Endothelial cell of umbilical vein (primary cell): ENCODE measurements at regions of chr19 and their contacts with region 1.

Region 1: DNA sequence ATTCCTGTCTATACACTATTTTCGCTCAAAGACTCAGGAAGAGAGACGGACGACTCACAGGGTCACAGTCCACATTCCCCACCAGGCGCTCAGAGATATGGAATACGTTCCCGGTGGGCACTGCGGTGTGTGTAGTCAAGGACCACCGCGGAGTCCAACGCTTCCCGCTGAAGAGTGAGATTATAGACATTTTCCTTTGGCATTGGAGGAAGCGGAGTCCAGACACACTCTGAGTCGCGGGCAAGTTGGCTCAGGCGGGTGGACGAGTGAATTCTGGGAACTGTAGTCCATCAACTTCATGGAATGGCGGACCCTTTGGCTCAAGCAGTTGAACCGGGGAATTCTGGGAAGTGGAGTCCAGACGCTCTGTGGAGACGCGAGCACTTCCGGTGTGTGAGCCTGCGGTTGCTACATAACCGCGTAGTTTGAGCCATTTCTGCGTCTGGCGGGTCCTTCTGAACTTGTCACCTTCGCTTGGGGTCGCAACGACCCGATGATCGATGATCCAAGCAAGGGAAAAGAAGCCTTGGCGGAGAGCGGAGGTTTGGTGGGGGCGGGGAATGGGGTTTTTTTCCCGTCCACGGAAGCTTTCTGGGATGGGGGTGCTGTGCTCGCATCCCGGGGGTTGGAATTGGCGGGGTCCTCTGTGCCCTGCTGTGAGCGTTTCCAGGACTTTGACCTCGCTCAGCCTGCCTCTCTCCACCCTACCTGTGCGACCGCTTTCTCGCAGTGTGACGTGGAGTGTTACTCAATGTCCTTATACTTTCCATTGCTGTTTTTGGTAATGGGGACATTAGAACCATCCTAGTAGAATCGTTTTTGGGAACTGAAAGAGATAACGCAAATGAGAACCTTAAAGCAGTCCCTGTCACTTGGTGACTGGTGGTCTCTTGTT is at the start of gene ZNF230:
- DNase-seq: peak; percentile 96
- H3K4me3 ChIP-seq: peak within 1 kb of the TSS; percentile 59 to 86 (median 84)
- H3K27ac ChIP-seq: peak within 1 kb of the TSS; percentile 36
- H3K4me1 ChIP-seq: peaks cover 6% of the 10 kb centered on the region
- H3K27me3 ChIP-seq: no peaks in the 10 kb centered on the region
- CTCF ChIP-seq: no peak
- POLR2A ChIP-seq: peak; percentile 69
- total RNA-seq, gene ZNF230: 2.9 TPM in 2 replicates

Region 2: GRCh38 chr19:43913383-43913782 is 89.4 kb before region 1 on chr19:
- CTCF ChIA-PET with region 1: no interaction called
- POLR2A ChIA-PET with region 1: no interaction called
- dilution Hi-C with region 1: no loop called
- intact Hi-C with region 1: no loop called
- DNase-seq: no peak
- H3K4me3 ChIP-seq: no peak overlapping the region
- H3K27ac ChIP-seq: no peak overlapping the region
- H3K4me1 ChIP-seq: no peaks in the 10 kb centered on the region
- H3K27me3 ChIP-seq: no peaks in the 10 kb centered on the region
- CTCF ChIP-seq: no peak
- POLR2A ChIP-seq: no peak

Region 3: GRCh38 chr19:43934985-43935708 is 67.7 kb before region 1 on chr19 and contains the start of gene ZNF45:
- CTCF ChIA-PET with region 1: no interaction called
- POLR2A ChIA-PET with region 1: no interaction called
- dilution Hi-C with region 1: no loop called
- intact Hi-C with region 1: loop called (anchors 1 kb)
- DNase-seq: peak; percentile 93
- H3K4me3 ChIP-seq: peak within 1 kb of the TSS; percentile 43 to 94 (median 71)
- H3K27ac ChIP-seq: peak within 1 kb of the TSS; percentile 26
- H3K4me1 ChIP-seq: peaks cover 13% of the 10 kb centered on the region
- H3K27me3 ChIP-seq: no peaks in the 10 kb centered on the region
- CTCF ChIP-seq: no peak
- POLR2A ChIP-seq: peak; percentile 53
- total RNA-seq, gene ZNF45: 10.8 and 11.2 TPM in 2 replicates

Region 4: GRCh38 chr19:43983912-43984686 is 18.7 kb before region 1 on chr19 and contains the start of gene ZNF155:
- CTCF ChIA-PET with region 1: no interaction called
- POLR2A ChIA-PET with region 1: interaction called, 3 read pairs
- dilution Hi-C with region 1: no loop called
- intact Hi-C with region 1: loop called (anchors 1 kb)
- DNase-seq: peak; percentile 95
- H3K4me3 ChIP-seq: peak within 1 kb of the TSS; percentile 32 to 75 (median 68)
- H3K27ac ChIP-seq: peak within 1 kb of the TSS; percentile 23
- H3K4me1 ChIP-seq: peaks cover 6% of the 10 kb centered on the region
- H3K27me3 ChIP-seq: no peaks in the 10 kb centered on the region
- CTCF ChIP-seq: no peak
- POLR2A ChIP-seq: peak; percentile 39
- total RNA-seq, gene ZNF155: 5.9 and 7.6 TPM in 2 replicates

Region 5: DNA sequence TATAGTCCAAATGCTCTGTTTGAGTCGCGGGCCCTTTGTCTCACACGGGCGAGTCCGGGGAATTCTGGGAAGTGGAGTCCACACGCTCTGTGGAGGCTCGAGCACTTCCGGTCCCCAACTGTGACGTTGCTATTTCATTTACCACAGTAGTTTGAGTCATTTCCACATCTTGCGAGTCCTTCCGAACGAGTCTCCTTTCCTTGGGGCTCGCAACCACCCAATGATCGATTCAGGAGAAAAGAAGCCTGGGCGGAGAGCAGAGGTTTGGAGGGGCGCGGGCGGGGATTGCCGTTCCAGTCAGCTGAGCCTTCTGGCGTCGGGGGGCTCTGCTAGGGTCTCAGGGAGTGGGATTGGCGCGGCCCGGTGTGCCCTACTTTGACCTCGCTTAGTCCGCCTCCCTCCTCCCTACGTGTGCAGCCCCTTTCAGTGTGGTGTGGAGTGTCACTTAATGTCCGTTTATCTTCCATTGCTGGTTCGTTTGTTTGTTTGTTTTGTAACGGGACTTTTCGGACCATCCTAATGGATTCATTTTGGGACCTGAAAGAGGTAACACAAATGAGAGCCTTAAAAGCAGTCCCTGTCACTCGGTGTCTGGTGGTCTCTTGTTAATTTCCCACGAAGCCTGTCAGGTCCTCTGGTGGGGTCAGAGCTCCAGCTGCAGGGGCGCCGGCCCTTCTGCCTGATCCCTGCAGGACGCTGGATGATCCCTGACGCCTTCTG is 22.6 kb after region 1 on chr19 and contains the start of gene ZNF222:
- CTCF ChIA-PET with region 1: interaction called, 3 read pairs
- POLR2A ChIA-PET with region 1: no interaction called
- dilution Hi-C with region 1: no loop called
- intact Hi-C with region 1: loop called (anchors 1 kb)
- DNase-seq: peak; percentile 88
- H3K4me3 ChIP-seq: peak within 1 kb of the TSS; percentile 76 to 91 (median 88)
- H3K27ac ChIP-seq: peak within 1 kb of the TSS; percentile 70
- H3K4me1 ChIP-seq: no peaks in the 10 kb centered on the region
- H3K27me3 ChIP-seq: peaks cover 2 to 3% of the 10 kb centered on the region in 2 experiments
- CTCF ChIP-seq: no peak
- POLR2A ChIP-seq: peak; percentile 61
- total RNA-seq, gene ZNF222: 4.7 and 5.2 TPM in 2 replicates

Region 6: GRCh38 chr19:44071824-44072542 is 69.2 kb after region 1 on chr19 and contains the start of gene ZNF284:
- CTCF ChIA-PET with region 1: no interaction called
- POLR2A ChIA-PET with region 1: no interaction called
- dilution Hi-C with region 1: no loop called
- intact Hi-C with region 1: loop called (anchors 1 kb)
- DNase-seq: peak; percentile 91
- H3K4me3 ChIP-seq: peak within 1 kb of the TSS; percentile 10 to 67 (median 55)
- H3K27ac ChIP-seq: peak within 1 kb of the TSS; percentile 14
- H3K4me1 ChIP-seq: peaks cover 10% of the 10 kb centered on the region
- H3K27me3 ChIP-seq: no peaks in the 10 kb centered on the region
- CTCF ChIP-seq: no peak
- POLR2A ChIP-seq: peak; percentile 64
- total RNA-seq, gene ZNF284: 2.4 and 2.7 TPM in 2 replicates

Region 7: GRCh38 chr19:44141191-44142058 is 138.6 kb after region 1 on chr19 and contains the start of gene ZNF234:
- CTCF ChIA-PET with region 1: no interaction called
- POLR2A ChIA-PET with region 1: interaction called, 12 read pairs
- dilution Hi-C with region 1: no loop called
- intact Hi-C with region 1: no loop called
- DNase-seq: peak; percentile 83
- H3K4me3 ChIP-seq: peak within 1 kb of the TSS; percentile 64 to 71 (median 67)
- H3K27ac ChIP-seq: peak within 1 kb of the TSS; percentile 14
- H3K4me1 ChIP-seq: peaks cover 6% of the 10 kb centered on the region
- H3K27me3 ChIP-seq: no peaks in the 10 kb centered on the region
- CTCF ChIP-seq: no peak
- POLR2A ChIP-seq: peak; percentile 59
- total RNA-seq, gene ZNF234: 10.6 and 11.9 TPM in 2 replicates

Region 8: GRCh38 chr19:44151491-44151890 is 148.7 kb after region 1 on chr19:
- CTCF ChIA-PET with region 1: no interaction called
- POLR2A ChIA-PET with region 1: no interaction called
- dilution Hi-C with region 1: no loop called
- intact Hi-C with region 1: no loop called
- DNase-seq: no peak
- H3K4me3 ChIP-seq: no peak overlapping the region
- H3K27ac ChIP-seq: no peak overlapping the region
- H3K4me1 ChIP-seq: no peaks in the 10 kb centered on the region
- H3K27me3 ChIP-seq: no peaks in the 10 kb centered on the region
- CTCF ChIP-seq: no peak
- POLR2A ChIP-seq: no peak

Region 9: GRCh38 chr19:44304659-44305193 is 301.9 kb after region 1 on chr19 and contains the start of gene ZNF235:
- CTCF ChIA-PET with region 1: no interaction called
- POLR2A ChIA-PET with region 1: no interaction called
- dilution Hi-C with region 1: no loop called
- intact Hi-C with region 1: loop called (anchors 10 kb)
- DNase-seq: peak; percentile 97
- H3K4me3 ChIP-seq: peak within 1 kb of the TSS; percentile 76 to 95 (median 82)
- H3K27ac ChIP-seq: peak within 1 kb of the TSS; percentile 63
- H3K4me1 ChIP-seq: peaks cover 5% of the 10 kb centered on the region
- H3K27me3 ChIP-seq: no peaks in the 10 kb centered on the region
- CTCF ChIP-seq: no peak
- POLR2A ChIP-seq: peak; percentile 51
- total RNA-seq, gene ZNF235: 5.2 TPM in 2 replicates